Dendritic cell treated with granulocyte-macrophage colony-stimulating factor and Interleukin-4, amounts not matched to agents 40 ng/mL and 50 ng/mL, for 4 days (primary cell): ENCODE measurements at regions of chr4 and their contacts with region 1.

Region 1: GRCh38 chr4:102760645-102761295 is at the start of gene MANBA:
- H3K4me3 Mint-ChIP-seq: peak within 1 kb of the TSS; percentile 82
- H3K27ac Mint-ChIP-seq: peak within 1 kb of the TSS; percentile 96
- H3K4me1 Mint-ChIP-seq: peaks cover 49% of the 10 kb centered on the region
- H3K27me3 Mint-ChIP-seq: peaks cover 6% of the 10 kb centered on the region

Region 2: GRCh38 chr4:102717448-102718092 is 43.2 kb before region 1 on chr4:
- intact Hi-C with region 1: no loop called
- H3K4me3 Mint-ChIP-seq: no peak overlapping the region
- H3K27ac Mint-ChIP-seq: no peak overlapping the region
- H3K4me1 Mint-ChIP-seq: no peaks in the 10 kb centered on the region
- H3K27me3 Mint-ChIP-seq: no peaks in the 10 kb centered on the region

Region 3: DNA sequence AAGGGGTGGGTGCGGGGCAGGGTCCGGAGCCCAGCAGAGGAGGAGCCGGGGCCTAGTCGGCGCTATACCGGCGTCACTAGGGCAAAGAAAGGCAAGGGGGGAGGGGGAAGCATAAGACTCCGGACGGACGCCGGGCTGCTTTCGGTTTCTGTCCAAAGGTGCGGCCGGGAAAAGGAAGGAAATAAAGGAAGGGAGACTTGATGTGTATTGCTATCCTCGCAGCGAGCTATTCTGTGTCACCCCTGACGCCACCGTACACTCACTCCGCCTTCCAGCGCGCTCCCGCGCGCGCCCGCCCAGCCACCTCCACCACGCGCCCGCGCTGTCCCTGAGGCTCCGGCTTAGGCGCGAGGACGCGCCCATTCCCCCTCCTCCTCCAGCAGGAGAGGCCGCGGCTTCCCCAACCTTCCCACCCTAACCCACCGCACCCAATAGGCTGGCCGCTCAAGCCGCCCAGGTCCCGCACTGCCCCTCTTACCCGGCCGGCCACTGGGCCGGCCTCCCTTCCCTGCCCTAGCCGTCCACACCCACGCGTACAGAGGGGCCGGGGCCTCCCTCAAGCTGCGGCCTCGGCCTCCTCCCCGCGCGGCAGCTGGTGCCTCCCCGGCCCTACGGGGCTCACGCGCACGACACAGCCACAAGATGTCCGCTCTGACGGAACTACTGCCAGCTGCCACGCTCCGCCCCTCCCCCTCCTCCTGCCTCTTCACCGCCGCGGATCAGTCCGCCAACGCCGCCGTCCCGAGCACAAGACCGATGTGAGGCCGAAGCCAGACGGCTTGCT is 66.3 kb after region 1 on chr4 and contains the start of gene UBE2D3:
- intact Hi-C with region 1: loop called (anchors 1 kb)
- H3K4me3 Mint-ChIP-seq: no peak within 1 kb of the TSS
- H3K27ac Mint-ChIP-seq: no peak within 1 kb of the TSS
- H3K4me1 Mint-ChIP-seq: peaks cover 27% of the 10 kb centered on the region
- H3K27me3 Mint-ChIP-seq: no peaks in the 10 kb centered on the region

Region 4: DNA sequence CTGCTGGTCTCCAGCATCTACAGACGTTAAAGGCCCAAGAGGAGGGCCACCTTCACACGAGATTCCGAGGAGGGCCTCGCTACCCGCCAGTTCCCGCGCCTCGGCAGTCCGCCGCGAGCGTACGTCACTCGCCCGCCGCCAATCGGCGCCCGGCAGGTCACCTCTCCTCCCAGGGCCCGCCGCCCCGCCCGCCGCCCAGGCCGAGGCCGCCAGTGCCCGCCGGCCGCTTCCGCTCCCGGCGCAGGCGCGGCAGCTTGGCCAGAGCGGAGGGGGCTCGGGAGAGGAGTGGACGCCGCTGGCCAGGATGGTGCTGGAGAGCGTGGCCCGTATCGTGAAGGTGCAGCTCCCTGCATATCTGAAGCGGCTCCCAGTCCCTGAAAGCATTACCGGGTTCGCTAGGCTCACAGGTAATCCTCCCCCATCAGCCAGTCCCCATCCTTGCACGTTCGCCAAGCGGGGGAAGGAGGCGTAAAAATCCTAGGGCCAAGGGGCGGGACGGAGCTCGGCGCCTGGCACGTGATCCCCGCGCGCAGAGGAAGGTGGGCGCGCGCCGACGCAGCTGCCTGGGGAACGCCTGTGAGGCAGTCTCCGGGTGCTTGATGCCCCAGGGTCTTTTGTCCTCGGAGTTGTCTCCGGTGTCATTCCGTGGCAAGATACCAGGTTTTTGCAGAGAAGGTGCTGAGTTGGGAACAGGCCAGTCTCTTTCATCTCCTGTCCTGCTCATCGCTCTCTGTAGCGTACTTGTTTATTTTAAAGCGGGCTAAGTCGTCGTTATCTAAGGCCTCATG is 108.2 kb after region 1 on chr4 and contains the start of gene CISD2:
- intact Hi-C with region 1: loop called (anchors 2 kb)
- H3K4me3 Mint-ChIP-seq: peak within 1 kb of the TSS; percentile 92
- H3K27ac Mint-ChIP-seq: peak within 1 kb of the TSS; percentile 96
- H3K4me1 Mint-ChIP-seq: peaks cover 25% of the 10 kb centered on the region
- H3K27me3 Mint-ChIP-seq: no peaks in the 10 kb centered on the region